ENCODE measurements at regions of chr7 and their contacts with region 1.

Region 1: DNA sequence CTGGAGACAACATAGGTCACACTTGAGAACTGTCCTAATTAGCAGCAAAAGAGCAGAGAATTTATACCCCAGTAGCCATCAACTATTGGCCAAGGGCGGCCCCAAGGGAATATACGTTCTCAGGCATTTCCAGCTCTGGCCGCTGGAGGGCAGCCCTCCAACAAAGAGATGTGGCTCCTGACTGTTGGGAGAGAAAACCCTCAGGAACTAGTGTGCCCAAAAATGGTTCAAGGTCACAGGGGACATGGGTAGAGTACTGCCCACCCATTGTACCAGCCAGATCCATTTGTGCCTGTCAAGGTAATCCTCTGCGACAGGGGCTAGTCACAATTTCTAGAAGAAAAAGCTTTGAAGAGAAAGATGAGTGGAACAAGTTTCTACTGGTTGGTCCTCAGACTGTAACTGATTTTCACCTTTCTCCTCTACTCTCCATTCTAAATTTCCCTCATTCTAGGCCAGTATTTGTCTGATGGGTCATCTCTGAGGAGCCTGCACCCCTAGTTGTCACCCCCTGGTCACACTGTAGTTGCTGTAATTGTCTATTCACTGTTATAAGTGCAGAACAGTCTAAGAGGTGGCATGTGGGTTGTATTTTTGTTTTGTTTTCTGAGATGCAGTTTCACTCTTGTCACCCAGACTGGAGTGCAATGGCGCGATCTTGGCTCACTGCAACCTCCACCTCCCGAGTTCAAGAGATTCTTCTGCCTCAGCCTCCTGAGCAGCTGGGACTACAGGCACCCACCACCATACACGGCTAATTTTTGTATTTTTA is 14.7 kb upstream of the C7orf33 start:
- DNase-seq: peak; percentile 80
- ATAC-seq: peak; percentile 90
- H3K4me3 Mint-ChIP-seq: no peak overlapping the region
- H3K27ac Mint-ChIP-seq: peak overlapping the region; percentile 52
- H3K4me1 Mint-ChIP-seq: peaks cover 14% of the 10 kb centered on the region
- H3K27me3 Mint-ChIP-seq: peaks cover 13% of the 10 kb centered on the region

Region 2: GRCh38 chr7:148556924-148557323 is 18.9 kb before region 1 on chr7:
- CTCF ChIA-PET with region 1: interaction called, 56 read pairs
- POLR2A ChIA-PET with region 1: no interaction called
- DNase-seq: no peak
- ATAC-seq: no peak
- H3K4me3 Mint-ChIP-seq: no peak overlapping the region
- H3K27ac Mint-ChIP-seq: no peak overlapping the region
- H3K4me1 Mint-ChIP-seq: peaks cover 29% of the 10 kb centered on the region
- H3K27me3 Mint-ChIP-seq: peaks cover 50% of the 10 kb centered on the region

Region 3: DNA sequence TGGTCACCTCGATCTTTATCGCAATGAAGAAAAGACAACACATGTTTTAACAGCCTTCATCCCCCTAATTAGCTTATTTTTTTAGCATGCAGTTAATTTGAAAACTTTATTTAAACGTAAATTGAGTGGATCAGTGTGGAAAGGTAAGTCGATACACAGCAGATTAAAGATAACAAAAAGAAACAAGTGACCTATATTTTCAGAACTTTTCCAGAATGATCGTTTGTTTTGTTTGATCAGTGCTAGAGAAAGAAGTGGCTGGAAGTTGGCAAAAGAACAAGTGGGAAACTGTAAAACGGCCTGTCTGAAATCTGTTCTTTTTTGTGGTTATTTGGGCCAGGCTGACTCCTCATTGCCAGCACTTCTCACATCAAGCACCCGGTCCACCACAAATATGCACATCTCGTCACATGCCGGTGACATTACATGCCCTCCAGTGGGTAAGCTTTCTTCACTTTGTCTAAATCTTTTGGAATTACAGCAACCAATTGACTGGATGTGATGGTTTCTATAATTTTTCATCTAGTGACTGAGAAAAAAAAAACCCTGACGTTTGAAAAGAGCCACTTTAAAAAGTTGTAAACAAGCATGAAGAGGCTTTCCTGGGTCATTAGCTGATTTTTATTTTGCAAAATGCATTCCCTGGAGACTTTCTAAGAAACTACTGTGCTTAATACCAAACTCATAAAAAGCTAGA is 47.9 kb after region 1 on chr7:
- CTCF ChIA-PET with region 1: interaction called, 11 read pairs
- POLR2A ChIA-PET with region 1: interaction called, 3 read pairs
- DNase-seq: no peak
- ATAC-seq: no peak
- H3K4me3 Mint-ChIP-seq: no peak overlapping the region
- H3K27ac Mint-ChIP-seq: no peak overlapping the region
- H3K4me1 Mint-ChIP-seq: peaks cover 55% of the 10 kb centered on the region
- H3K27me3 Mint-ChIP-seq: peaks cover 24% of the 10 kb centered on the region

Region 4: DNA sequence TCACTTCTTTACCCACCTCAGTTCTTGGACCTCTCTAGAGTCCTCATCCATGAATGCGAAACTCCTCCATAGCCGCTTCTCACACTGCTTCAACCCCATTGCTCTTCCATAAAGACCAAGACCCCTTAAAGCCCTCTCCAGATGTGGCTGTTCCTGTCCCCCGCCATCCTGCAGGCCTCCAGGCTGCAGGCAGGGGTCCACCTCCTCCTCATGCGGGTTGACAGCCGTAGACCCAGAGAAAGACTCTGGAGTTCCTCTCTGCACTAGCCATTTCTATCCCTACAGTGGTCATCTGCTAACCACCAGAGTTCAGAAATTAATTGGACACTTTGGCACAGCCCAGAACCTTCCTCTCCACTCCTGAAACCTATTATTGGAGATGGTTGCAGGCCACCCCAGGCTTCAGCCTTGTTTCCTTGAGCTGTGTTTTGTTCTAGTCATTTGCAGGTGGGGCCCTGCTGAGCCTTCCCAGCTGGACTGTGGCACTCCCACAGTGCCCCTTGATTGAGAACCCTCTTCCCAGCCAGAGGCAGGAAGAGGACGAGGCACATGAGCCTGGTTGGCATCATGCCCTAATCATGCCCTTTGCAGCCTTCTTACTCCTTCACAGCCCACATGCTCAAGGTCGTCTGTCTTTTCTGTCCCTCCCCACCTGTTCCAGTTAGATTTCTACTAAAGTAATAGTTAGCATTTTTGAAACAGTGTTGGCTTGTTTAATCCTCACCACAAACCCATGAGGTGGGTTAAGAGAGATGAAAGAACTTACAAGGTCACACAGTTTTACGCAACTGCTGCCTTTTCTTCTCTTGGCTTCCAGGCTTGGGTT is 146.7 kb after region 1 on chr7:
- CTCF ChIA-PET with region 1: interaction called, 13 read pairs
- POLR2A ChIA-PET with region 1: no interaction called
- DNase-seq: peak; percentile 30
- ATAC-seq: peak; percentile 59
- H3K4me3 Mint-ChIP-seq: no peak overlapping the region
- H3K27ac Mint-ChIP-seq: peak overlapping the region; percentile 60
- H3K4me1 Mint-ChIP-seq: peaks cover 64% of the 10 kb centered on the region
- H3K27me3 Mint-ChIP-seq: no peaks in the 10 kb centered on the region

Region 5: GRCh38 chr7:148815612-148816011 is 239.8 kb after region 1 on chr7:
- CTCF ChIA-PET with region 1: interaction called, 10 read pairs
- POLR2A ChIA-PET with region 1: no interaction called
- DNase-seq: no peak
- ATAC-seq: no peak
- H3K4me3 Mint-ChIP-seq: no peak overlapping the region
- H3K27ac Mint-ChIP-seq: no peak overlapping the region
- H3K4me1 Mint-ChIP-seq: no peaks in the 10 kb centered on the region
- H3K27me3 Mint-ChIP-seq: no peaks in the 10 kb centered on the region